ENCODE measurements at regions of chr1 and their contacts with region 1.

Region 1: GRCh38 chr1:39653546-39654031 is 14.1 kb upstream of the HEYL start:
- DNase-seq: peak; percentile 72

Region 2: DNA sequence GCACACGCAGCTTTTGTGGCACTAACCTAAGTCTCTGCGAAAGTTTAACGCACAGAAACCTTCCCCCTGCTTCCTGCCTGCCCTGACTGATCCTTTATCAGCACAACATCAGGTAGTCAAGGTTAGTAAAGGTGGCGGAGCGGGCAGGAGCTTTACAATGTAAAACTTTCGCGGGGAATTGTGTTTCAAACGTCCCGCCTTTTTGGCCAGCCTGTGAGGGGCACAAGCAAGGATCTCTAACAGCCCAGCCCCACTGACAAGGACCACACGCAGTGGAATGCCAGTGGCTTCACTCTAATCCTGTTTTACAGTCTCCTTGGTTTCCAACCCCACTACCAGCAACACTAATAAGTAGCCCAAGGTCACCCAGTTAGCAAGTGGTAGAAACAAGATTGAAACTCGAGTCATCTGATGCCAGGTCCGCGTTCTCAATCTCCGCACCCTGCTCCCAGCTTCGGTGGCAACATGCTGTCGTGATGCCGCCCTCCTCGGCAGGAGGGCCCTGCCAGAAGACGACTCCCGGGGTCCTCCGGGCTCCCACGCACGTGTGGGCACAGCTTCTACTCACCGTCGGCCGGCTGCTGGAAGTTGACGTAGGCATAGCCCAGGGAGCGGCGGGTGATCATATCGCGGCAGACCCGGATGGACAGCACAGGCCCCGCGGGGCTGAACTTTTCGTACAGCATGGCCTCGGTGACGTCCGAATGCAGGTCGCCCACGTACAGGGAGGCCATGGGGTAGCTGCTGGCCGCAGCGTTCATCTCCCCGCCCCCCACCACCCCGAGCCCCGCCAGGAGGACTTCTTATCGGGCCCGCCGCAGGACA is 78.2 kb before region 1 on chr1:
- CTCF ChIA-PET with region 1: interaction called, 12 read pairs
- POLR2A ChIA-PET with region 1: no interaction called
- DNase-seq: no peak

Region 3: GRCh38 chr1:39666772-39667171 is 13.2 kb after region 1 on chr1:
- CTCF ChIA-PET with region 1: interaction called, 79 read pairs
- POLR2A ChIA-PET with region 1: interaction called, 34 read pairs
- DNase-seq: no peak

Region 4: DNA sequence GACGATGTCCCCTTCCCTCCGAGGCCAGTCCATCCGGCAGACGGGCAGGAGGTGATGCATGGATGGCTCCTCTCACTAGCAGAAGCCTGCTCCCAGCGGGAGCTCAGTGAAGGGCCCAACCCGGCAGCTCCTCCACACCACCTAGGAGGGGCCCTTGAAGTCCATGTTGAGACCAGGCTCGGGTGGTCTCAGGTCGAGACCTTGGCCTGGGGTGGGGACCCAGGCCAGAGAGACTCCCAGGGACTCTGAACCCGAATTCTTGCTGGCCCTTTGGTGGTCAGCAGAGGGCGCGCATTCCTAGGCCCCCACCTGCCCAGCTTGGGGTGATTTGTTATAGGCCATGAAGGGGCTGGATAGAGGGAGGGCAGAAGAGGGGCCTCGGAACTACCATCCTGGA is 19.0 kb after region 1 on chr1:
- CTCF ChIA-PET with region 1: interaction called, 79 read pairs
- POLR2A ChIA-PET with region 1: interaction called, 34 read pairs
- DNase-seq: peak; percentile 26

Measured in HEK293T (cell line).